Naive thymus-derived CD4-positive, alpha-beta T cell (primary cell): ENCODE measurements at regions of chr12 and their contacts with region 1.

Region 1: DNA sequence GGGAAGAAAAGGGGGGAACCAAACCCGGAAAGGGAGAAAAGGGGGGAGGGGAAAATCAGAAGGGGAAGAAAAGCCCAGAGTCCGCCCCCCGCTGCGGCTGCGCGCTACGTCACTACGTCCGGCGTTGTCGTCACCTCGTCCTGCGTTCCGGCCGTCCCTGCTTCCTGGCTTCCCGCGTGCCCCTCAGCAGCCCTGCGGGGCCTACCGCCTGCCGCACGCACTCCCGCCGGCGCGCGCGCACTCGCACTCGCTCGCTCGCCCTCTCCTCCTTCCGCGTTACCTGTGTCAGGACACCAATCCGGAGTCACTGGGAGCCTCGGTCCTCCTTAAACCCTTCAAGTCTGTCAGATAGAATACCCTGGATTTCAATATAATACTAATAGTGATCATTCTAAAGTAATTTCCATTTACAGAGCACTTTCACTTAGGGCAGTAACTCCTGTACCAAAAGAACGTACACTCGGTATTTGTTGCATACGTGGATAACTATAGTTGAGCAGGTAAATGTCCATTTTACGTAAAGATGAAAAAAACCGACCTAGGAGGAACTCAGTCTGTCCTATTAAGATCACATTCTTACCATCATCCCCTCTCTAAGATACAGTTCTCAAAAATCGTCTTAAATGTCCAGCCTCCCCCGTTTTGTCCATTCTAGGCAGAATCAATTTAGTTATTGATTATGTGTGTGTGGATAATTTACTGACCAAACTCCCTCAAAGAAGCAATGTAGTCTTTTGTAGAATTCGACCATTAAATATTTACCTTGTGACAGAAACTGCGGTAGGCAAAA is at the start of gene R3HDM2:
- DNase-seq: peak; percentile 83 to 96 (median 94)
- ATAC-seq: peak; percentile 95
- H3K4me3 ChIP-seq: peak within 1 kb of the TSS; percentile 55
- H3K4me3 Mint-ChIP-seq: peak within 1 kb of the TSS; percentile 88 to 100 (median 98)
- H3K27ac ChIP-seq: peak within 1 kb of the TSS; percentile 85
- H3K27ac Mint-ChIP-seq: peak within 1 kb of the TSS; percentile 97 to 100 (median 99)
- H3K4me1 ChIP-seq: peaks cover 8 to 17% of the 10 kb centered on the region in 2 donors
- H3K4me1 Mint-ChIP-seq: peaks cover 27 to 53% (median 39%) of the 10 kb centered on the region in 7 donors
- H3K27me3 ChIP-seq: no peaks in the 10 kb centered on the region
- H3K27me3 Mint-ChIP-seq: no peaks in the 10 kb centered on the region
- total RNA-seq, gene R3HDM2: 74.9 to 145 (median 120) TPM

Region 2: GRCh38 chr12:56266693-56267442 is 1164.3 kb before region 1 on chr12 and contains the start of gene COQ10A:
- CTCF ChIA-PET with region 1: no interaction called
- POLR2A ChIA-PET with region 1: no interaction called
- intact Hi-C with region 1: loop called in 1 of 2 experiments (anchors 5 kb)
- DNase-seq: peak; percentile 78 to 92 (median 89)
- ATAC-seq: peak; percentile 93
- H3K4me3 ChIP-seq: peak within 1 kb of the TSS; percentile 88
- H3K4me3 Mint-ChIP-seq: peak within 1 kb of the TSS; percentile 83 to 100 (median 96)
- H3K27ac ChIP-seq: peak within 1 kb of the TSS; percentile 94
- H3K27ac Mint-ChIP-seq: peak within 1 kb of the TSS; percentile 89 to 97 (median 94)
- H3K4me1 ChIP-seq: peaks cover 0 to 8% of the 10 kb centered on the region in 2 donors
- H3K4me1 Mint-ChIP-seq: peaks cover 0 to 22% (median 20%) of the 10 kb centered on the region in 7 donors
- H3K27me3 ChIP-seq: no peaks in the 10 kb centered on the region
- H3K27me3 Mint-ChIP-seq: peaks cover 0 to 2% (median 0%) of the 10 kb centered on the region in 5 donors
- total RNA-seq, gene COQ10A: 22.5 to 39.4 (median 31.5) TPM

Region 3: GRCh38 chr12:57229634-57230380 is 201.3 kb before region 1 on chr12 and contains the start of gene SHMT2:
- CTCF ChIA-PET with region 1: no interaction called
- POLR2A ChIA-PET with region 1: interaction called, 3 read pairs
- intact Hi-C with region 1: loop called in 1 of 2 experiments (anchors 1 kb)
- DNase-seq: peak; percentile 73 to 92 (median 88)
- ATAC-seq: peak; percentile 62
- H3K4me3 ChIP-seq: peak within 1 kb of the TSS; percentile 82
- H3K4me3 Mint-ChIP-seq: peak within 1 kb of the TSS; percentile 88 to 99 (median 92)
- H3K27ac ChIP-seq: peak within 1 kb of the TSS; percentile 69
- H3K27ac Mint-ChIP-seq: peak within 1 kb of the TSS; percentile 3 to 95 (median 84)
- H3K4me1 ChIP-seq: peaks cover 21 to 46% of the 10 kb centered on the region in 2 donors
- H3K4me1 Mint-ChIP-seq: peaks cover 38 to 66% (median 55%) of the 10 kb centered on the region in 7 donors
- H3K27me3 ChIP-seq: peaks cover 6 to 12% of the 10 kb centered on the region in 2 donors
- H3K27me3 Mint-ChIP-seq: peaks cover 11 to 28% (median 23%) of the 10 kb centered on the region in 5 donors
- total RNA-seq, gene SHMT2: 21.7 to 175 (median 36.1) TPM

Region 4: GRCh38 chr12:57476162-57476992 is 45.3 kb after region 1 on chr12:
- CTCF ChIA-PET with region 1: no interaction called
- POLR2A ChIA-PET with region 1: no interaction called
- intact Hi-C with region 1: loop called in 1 of 2 experiments (anchors 1 kb)
- DNase-seq: peak; percentile 58 to 85 (median 70)
- ATAC-seq: peak; percentile 53
- H3K4me3 ChIP-seq: peak overlapping the region; percentile 95
- H3K4me3 Mint-ChIP-seq: peak overlapping the region; percentile 84 to 100 (median 98)
- H3K27ac ChIP-seq: peak overlapping the region; percentile 94
- H3K27ac Mint-ChIP-seq: peak overlapping the region; percentile 97 to 100 (median 100)
- H3K4me1 ChIP-seq: peaks cover 59 to 70% of the 10 kb centered on the region in 2 donors
- H3K4me1 Mint-ChIP-seq: peaks cover 66 to 85% (median 76%) of the 10 kb centered on the region in 7 donors
- H3K27me3 ChIP-seq: no peaks in the 10 kb centered on the region
- H3K27me3 Mint-ChIP-seq: no peaks in the 10 kb centered on the region

Region 5: DNA sequence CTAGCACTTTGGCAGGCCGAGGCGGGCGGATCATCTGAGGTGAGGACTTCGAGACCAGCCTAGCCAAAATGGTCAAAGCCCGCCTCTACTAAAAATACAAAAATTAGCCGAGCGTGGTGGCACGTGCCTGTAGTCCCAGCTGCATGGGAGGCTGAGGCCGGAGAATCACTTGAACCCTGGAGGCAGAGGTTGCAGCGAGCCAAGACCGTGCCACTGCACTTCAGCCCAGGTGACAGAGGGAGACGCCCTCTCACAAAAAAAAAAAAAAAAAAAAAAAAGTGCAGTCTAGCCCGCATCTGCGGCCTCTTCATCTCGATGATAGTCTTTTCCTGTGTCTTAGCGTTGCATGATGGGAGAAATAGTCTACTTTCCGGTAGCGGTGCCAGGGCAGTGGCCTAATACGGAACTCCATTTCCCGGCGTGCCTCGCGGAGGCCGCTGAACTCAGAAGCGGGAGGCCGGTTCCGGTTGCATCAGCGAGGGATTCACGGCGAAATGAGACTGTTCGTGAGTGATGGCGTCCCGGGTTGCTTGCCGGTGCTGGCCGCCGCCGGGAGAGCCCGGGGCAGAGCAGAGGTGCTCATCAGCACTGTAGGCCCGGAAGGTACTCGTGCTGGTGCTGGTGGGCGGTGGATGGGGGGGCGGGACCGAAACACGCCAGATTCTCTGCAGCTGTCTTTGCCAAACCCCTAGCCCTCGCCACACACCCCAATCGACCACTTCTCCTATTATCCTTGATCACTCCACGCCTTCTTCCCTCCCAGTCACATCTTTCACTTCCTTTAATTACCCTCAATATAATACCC is 56.7 kb after region 1 on chr12 and contains the start of gene MARS1:
- CTCF ChIA-PET with region 1: no interaction called
- POLR2A ChIA-PET with region 1: interaction called, 6 read pairs
- intact Hi-C with region 1: loop called (anchors 2 kb)
- DNase-seq: peak; percentile 71 to 95 (median 93)
- ATAC-seq: peak; percentile 99
- H3K4me3 ChIP-seq: peak within 1 kb of the TSS; percentile 89
- H3K4me3 Mint-ChIP-seq: peak within 1 kb of the TSS; percentile 89 to 100 (median 98)
- H3K27ac ChIP-seq: peak within 1 kb of the TSS; percentile 86
- H3K27ac Mint-ChIP-seq: peak within 1 kb of the TSS; percentile 86 to 99 (median 96)
- H3K4me1 ChIP-seq: peaks cover 17 to 21% of the 10 kb centered on the region in 2 donors
- H3K4me1 Mint-ChIP-seq: peaks cover 21 to 48% (median 40%) of the 10 kb centered on the region in 7 donors
- H3K27me3 ChIP-seq: no peaks in the 10 kb centered on the region
- H3K27me3 Mint-ChIP-seq: peaks cover 0 to 2% (median 0%) of the 10 kb centered on the region in 5 donors
- total RNA-seq, gene MARS1: 178 to 229 (median 197) TPM

Region 6: DNA sequence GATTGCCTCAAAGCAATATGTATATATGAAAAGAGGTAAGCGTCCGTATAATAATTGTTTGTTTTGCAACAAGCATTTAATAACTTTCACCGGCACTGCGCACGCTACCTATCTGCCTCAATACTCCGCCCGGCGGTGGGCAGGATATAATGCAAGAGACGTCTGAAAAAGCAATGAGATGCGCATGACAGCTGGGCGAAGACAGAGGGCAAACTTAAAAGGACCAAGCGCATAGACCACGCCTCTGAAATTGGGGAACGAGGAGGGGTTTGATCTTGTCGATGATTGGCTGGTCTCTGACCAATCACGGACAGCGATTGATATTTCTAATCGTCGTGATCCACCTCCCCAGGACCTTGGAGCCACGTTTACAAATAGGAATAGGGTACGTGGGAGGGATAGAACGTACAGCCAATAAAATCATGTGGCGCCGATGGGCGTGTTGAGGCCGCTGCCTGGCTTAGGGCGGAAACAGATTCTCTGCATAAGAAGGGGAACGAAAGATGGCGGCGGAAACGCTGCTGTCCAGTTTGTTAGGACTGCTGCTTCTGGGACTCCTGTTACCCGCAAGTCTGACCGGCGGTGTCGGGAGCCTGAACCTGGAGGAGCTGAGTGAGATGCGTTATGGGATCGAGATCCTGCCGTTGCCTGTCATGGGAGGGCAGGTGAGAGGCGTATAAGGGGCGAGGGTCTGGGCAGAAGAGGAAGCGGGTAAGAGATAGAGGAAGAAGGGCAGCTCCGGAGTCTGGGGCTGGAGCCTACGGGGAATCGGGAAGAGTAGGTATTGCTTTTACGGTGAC is 262.7 kb after region 1 on chr12 and contains the start of gene OS9:
- CTCF ChIA-PET with region 1: no interaction called
- POLR2A ChIA-PET with region 1: no interaction called
- intact Hi-C with region 1: loop called in 1 of 2 experiments (anchors 2 kb)
- DNase-seq: peak; percentile 76 to 99 (median 98)
- ATAC-seq: peak; percentile 96
- H3K4me3 ChIP-seq: peak within 1 kb of the TSS; percentile 92
- H3K4me3 Mint-ChIP-seq: no peak within 1 kb of the TSS
- H3K27ac ChIP-seq: peak within 1 kb of the TSS; percentile 83
- H3K27ac Mint-ChIP-seq: no peak within 1 kb of the TSS
- H3K4me1 ChIP-seq: peaks cover 10 to 23% of the 10 kb centered on the region in 2 donors
- H3K4me1 Mint-ChIP-seq: peaks cover 2 to 14% (median 7%) of the 10 kb centered on the region in 7 donors
- H3K27me3 ChIP-seq: no peaks in the 10 kb centered on the region
- H3K27me3 Mint-ChIP-seq: peaks cover 0 to 18% (median 7%) of the 10 kb centered on the region in 5 donors
- total RNA-seq, gene OS9: 139 to 175 (median 171) TPM